Esophagus muscularis mucosa (tissue), 4 donors: ENCODE measurements at regions of chr3 and their contacts with region 1.

Region 1: GRCh38 chr3:20340324-20340928 is 154.4 kb upstream of the SGO1 start:
- DNase-seq: peak; percentile 94
- H3K4me3 ChIP-seq: peak overlapping the region; percentile 11 to 32 (median 20)
- H3K27ac ChIP-seq: peak overlapping the region in 1 of 4 donors; percentile 15
- H3K4me1 ChIP-seq: peaks cover 0 to 12% (median 6%) of the 10 kb centered on the region in 4 donors
- H3K27me3 ChIP-seq: no peaks in the 10 kb centered on the region
- CTCF ChIP-seq: peak; percentile 80 to 96 (median 89)
- EP300 ChIP-seq: no peak
- POLR2A ChIP-seq: no peak

Region 2: DNA sequence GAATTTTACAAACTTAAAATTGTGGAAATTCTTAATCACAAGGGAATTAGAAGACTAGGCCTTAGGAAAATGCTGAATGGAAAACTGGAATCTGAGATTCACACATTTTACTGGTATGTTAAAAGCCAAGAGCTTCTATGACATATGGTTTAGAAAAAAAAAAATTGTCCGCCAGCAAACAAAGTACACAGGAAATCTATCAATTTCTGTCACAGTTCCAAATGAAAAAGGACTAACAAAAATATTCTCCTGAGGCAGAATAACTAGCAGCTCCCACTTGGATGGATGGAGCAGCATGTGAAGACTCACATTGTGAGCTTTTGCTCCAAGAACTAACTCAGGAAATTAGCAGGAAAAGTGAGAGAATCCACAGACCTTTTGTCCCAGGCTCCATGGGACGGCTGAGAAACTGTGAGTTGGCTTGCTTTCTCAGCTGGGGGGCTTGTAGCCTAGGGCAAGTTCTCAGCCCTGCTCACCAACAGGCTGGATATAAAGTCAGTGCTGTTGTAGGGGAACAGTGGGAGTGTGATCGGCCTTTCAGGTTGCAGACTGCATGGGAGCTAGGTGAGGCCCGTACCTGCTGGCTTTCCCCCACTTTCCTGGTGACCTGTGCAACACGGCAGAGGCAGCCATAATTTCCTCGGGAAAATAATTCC is 576.7 kb after region 1 on chr3:
- intact Hi-C with region 1: no loop called
- DNase-seq: no peak
- H3K4me3 ChIP-seq: no peak overlapping the region
- H3K27ac ChIP-seq: no peak overlapping the region
- H3K4me1 ChIP-seq: no peaks in the 10 kb centered on the region
- H3K27me3 ChIP-seq: no peaks in the 10 kb centered on the region
- CTCF ChIP-seq: no peak
- EP300 ChIP-seq: no peak
- POLR2A ChIP-seq: no peak

Region 3: GRCh38 chr3:21747376-21747775 is 1407.0 kb after region 1 on chr3:
- intact Hi-C with region 1: loop called (anchors 10 kb)
- DNase-seq: no peak
- H3K4me3 ChIP-seq: peak overlapping the region; percentile 61 to 73 (median 66)
- H3K27ac ChIP-seq: peak overlapping the region; percentile 47 to 85 (median 64)
- H3K4me1 ChIP-seq: peaks cover 22 to 77% (median 64%) of the 10 kb centered on the region in 4 donors
- H3K27me3 ChIP-seq: no peaks in the 10 kb centered on the region
- CTCF ChIP-seq: no peak
- EP300 ChIP-seq: no peak
- POLR2A ChIP-seq: no peak